ENCODE measurements at regions of chr4 and their contacts with region 1.

Region 1: GRCh38 chr4:158459085-158459820 is 62.4 kb upstream of the RXFP1 start:
- DNase-seq: peak; percentile 73
- H3K4me3 ChIP-seq: no peak overlapping the region
- H3K27ac ChIP-seq: peak overlapping the region; percentile 95
- H3K4me1 ChIP-seq: peaks cover 53% of the 10 kb centered on the region
- H3K27me3 ChIP-seq: no peaks in the 10 kb centered on the region
- CTCF ChIP-seq: no peak

Region 2: DNA sequence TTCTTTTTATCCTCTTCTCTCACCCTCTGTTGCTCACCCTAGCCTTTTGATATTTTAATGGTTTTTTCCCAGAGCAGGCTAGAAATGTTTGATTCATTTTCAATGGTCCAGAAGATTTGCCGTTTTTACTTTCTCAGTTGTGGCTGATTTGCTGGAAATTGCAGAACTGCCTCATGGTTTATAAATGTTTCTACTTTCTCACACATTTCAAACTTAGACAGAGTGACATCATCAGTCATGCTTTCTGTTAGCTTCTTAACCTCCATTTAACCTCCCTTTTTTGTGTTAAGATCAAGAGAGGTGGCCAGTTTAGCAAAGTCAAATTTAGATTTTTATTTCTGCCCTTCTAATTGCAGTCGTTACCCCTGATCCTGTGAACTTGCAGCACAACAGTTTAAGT is 71.1 kb after region 1 on chr4:
- CTCF ChIA-PET with region 1: no interaction called
- dilution Hi-C with region 1: loop called (anchors 5 kb)
- in situ Hi-C with region 1: no loop called
- intact Hi-C with region 1: no loop called
- DNase-seq: no peak
- H3K4me3 ChIP-seq: no peak overlapping the region
- H3K27ac ChIP-seq: no peak overlapping the region
- H3K4me1 ChIP-seq: peaks cover 5% of the 10 kb centered on the region
- H3K27me3 ChIP-seq: no peaks in the 10 kb centered on the region
- CTCF ChIP-seq: no peak

Region 3: DNA sequence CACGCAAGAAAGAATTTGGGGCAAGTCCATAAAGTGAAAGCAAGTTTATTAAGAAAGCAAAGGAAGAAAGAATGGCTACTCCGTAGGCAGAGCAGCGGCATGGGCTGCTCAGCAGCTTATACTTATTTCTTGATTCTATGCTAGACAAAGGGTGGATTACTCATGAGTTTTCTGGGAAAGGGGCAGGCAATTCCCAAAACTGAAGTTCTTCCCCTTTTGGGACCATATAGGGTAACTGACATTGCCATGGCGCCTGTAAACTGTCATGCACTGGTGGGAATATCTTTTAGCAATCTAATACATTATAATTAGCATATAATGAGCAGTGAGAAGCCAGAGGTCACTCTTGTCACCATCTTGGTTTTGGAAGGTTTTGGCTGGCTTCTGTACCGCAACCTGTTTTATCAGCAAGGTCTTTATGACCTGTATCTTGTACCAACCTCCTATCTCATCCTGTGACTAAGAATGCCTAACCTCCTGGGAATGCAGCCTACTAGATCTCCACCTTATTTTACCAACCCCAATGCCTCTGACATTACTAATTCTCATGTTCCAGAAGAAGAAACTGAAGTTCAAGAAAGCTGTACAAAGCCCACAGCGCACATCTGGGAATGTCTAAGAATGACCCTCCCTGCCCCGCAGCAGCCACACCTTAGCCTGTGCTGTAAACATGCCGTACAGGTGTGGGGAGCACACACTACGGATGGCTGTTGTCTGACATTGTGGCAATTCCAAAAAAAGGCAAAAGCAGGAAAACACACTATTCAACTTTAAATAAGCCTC is 81.1 kb after region 1 on chr4:
- CTCF ChIA-PET with region 1: no interaction called
- dilution Hi-C with region 1: no loop called
- in situ Hi-C with region 1: no loop called
- intact Hi-C with region 1: loop called (anchors 1 kb)
- DNase-seq: peak; percentile 85
- H3K4me3 ChIP-seq: no peak overlapping the region
- H3K27ac ChIP-seq: peak overlapping the region; percentile 94
- H3K4me1 ChIP-seq: peaks cover 55% of the 10 kb centered on the region
- H3K27me3 ChIP-seq: no peaks in the 10 kb centered on the region
- CTCF ChIP-seq: no peak